ENCODE measurements at regions of chr10 and their contacts with region 1.

Region 1: GRCh38 chr10:120942806-120943413 is 91.7 kb downstream of the WDR11 start:
- DNase-seq: peak; percentile 29 to 81 (median 58)
- ATAC-seq: peak; percentile 90
- H3K4me3 ChIP-seq: no peak overlapping the region
- H3K4me3 Mint-ChIP-seq: peak overlapping the region in 5 of 10 donors; percentile 25 to 65 (median 32)
- H3K27ac ChIP-seq: no peak overlapping the region
- H3K27ac Mint-ChIP-seq: no peak overlapping the region
- H3K4me1 ChIP-seq: no peaks in the 10 kb centered on the region
- H3K4me1 Mint-ChIP-seq: peaks cover 0 to 11% (median 5%) of the 10 kb centered on the region in 7 donors
- H3K27me3 ChIP-seq: no peaks in the 10 kb centered on the region
- H3K27me3 Mint-ChIP-seq: peaks cover 4 to 44% (median 20%) of the 10 kb centered on the region in 5 donors

Region 2: GRCh38 chr10:121112579-121113386 is 169.9 kb after region 1 on chr10:
- CTCF ChIA-PET with region 1: no interaction called
- POLR2A ChIA-PET with region 1: no interaction called
- intact Hi-C with region 1: no loop called
- DNase-seq: no peak
- ATAC-seq: no peak
- H3K4me3 ChIP-seq: no peak overlapping the region
- H3K4me3 Mint-ChIP-seq: no peak overlapping the region
- H3K27ac ChIP-seq: no peak overlapping the region
- H3K27ac Mint-ChIP-seq: no peak overlapping the region
- H3K4me1 ChIP-seq: no peaks in the 10 kb centered on the region
- H3K4me1 Mint-ChIP-seq: no peaks in the 10 kb centered on the region
- H3K27me3 ChIP-seq: no peaks in the 10 kb centered on the region
- H3K27me3 Mint-ChIP-seq: peaks cover 0 to 17% (median 4%) of the 10 kb centered on the region in 5 donors

Region 3: GRCh38 chr10:121608469-121609190 is 665.7 kb after region 1 on chr10:
- CTCF ChIA-PET with region 1: no interaction called
- POLR2A ChIA-PET with region 1: no interaction called
- intact Hi-C with region 1: loop called in 1 of 2 experiments (anchors 2 kb)
- DNase-seq: peak in 1 of 9 donors; percentile 58
- ATAC-seq: peak; percentile 58
- H3K4me3 ChIP-seq: no peak overlapping the region
- H3K4me3 Mint-ChIP-seq: no peak overlapping the region
- H3K27ac ChIP-seq: no peak overlapping the region
- H3K27ac Mint-ChIP-seq: no peak overlapping the region
- H3K4me1 ChIP-seq: no peaks in the 10 kb centered on the region
- H3K4me1 Mint-ChIP-seq: peaks cover 0 to 6% (median 0%) of the 10 kb centered on the region in 7 donors
- H3K27me3 ChIP-seq: no peaks in the 10 kb centered on the region
- H3K27me3 Mint-ChIP-seq: peaks cover 5 to 49% (median 38%) of the 10 kb centered on the region in 5 donors

Region 4: DNA sequence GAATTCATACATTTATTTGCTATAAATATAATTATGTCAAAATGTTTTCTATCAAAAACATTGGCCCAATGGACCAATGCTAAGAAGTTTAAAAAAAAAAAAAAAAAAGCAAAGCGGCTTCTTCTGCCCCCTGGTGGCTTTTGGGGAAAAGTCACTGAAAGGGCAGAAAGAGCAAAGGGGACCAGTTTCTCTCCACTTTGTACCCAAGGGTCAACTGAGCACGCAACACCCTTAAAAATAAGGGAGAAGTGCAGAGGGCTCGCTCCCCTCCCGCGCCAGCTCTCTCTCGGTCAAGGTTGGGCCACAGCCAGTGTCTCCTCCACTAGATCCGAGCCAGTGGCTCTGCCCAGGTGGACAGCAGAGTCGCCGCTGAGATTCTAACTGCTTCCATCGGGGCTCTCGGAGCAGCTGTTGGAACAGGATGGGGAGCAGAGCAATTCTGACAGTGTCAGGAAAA is 791.7 kb after region 1 on chr10:
- CTCF ChIA-PET with region 1: no interaction called
- POLR2A ChIA-PET with region 1: no interaction called
- intact Hi-C with region 1: loop called (anchors 1 to 2 kb)
- DNase-seq: no peak
- ATAC-seq: no peak
- H3K4me3 ChIP-seq: no peak overlapping the region
- H3K4me3 Mint-ChIP-seq: no peak overlapping the region
- H3K27ac ChIP-seq: no peak overlapping the region
- H3K27ac Mint-ChIP-seq: no peak overlapping the region
- H3K4me1 ChIP-seq: peaks cover 0 to 5% of the 10 kb centered on the region in 2 donors
- H3K4me1 Mint-ChIP-seq: peaks cover 0 to 18% (median 5%) of the 10 kb centered on the region in 7 donors
- H3K27me3 ChIP-seq: peaks cover 0 to 3% of the 10 kb centered on the region in 2 donors
- H3K27me3 Mint-ChIP-seq: peaks cover 11 to 36% (median 31%) of the 10 kb centered on the region in 5 donors

Region 5: DNA sequence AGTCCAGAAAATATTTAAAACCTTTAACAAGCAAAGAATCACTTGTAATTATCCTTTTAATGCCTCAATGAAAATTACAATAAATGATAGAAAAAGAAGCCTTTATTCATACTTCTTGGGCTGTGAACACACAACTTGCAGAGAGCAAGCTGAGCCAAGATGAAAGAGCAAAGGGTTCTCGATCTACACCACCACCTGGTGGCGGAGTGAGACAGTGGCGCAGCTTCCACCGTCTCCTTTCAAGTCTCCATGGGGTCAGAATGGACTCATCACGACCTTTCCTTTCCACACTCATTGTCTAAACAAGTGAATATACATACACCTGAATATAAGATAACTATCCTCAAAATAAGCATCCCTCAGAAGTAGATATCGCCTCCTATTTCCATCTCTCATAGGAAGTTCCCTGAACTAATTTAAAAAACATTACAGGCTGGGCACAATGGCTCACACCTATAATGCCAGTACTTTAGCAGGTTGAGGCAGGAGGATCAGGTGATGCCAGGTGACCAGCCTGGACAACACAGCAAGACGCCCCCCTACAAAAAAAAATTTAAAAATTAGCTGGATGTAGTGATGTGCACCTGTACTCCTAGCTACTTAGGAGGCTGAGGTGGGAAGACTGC is 944.2 kb after region 1 on chr10:
- CTCF ChIA-PET with region 1: no interaction called
- POLR2A ChIA-PET with region 1: no interaction called
- intact Hi-C with region 1: loop called in 1 of 2 experiments (anchors 2 kb)
- DNase-seq: peak; percentile 8 to 34 (median 29)
- ATAC-seq: peak; percentile 69
- H3K4me3 ChIP-seq: no peak overlapping the region
- H3K4me3 Mint-ChIP-seq: no peak overlapping the region
- H3K27ac ChIP-seq: no peak overlapping the region
- H3K27ac Mint-ChIP-seq: peak overlapping the region in 1 of 9 donors; percentile 6
- H3K4me1 ChIP-seq: no peaks in the 10 kb centered on the region
- H3K4me1 Mint-ChIP-seq: peaks cover 0 to 8% (median 0%) of the 10 kb centered on the region in 7 donors
- H3K27me3 ChIP-seq: no peaks in the 10 kb centered on the region
- H3K27me3 Mint-ChIP-seq: no peaks in the 10 kb centered on the region

Measured in naive thymus-derived CD4-positive, alpha-beta T cell (primary cell).